T-cell (primary cell): ENCODE measurements at regions of chr13 and their contacts with region 1.

Region 1: DNA sequence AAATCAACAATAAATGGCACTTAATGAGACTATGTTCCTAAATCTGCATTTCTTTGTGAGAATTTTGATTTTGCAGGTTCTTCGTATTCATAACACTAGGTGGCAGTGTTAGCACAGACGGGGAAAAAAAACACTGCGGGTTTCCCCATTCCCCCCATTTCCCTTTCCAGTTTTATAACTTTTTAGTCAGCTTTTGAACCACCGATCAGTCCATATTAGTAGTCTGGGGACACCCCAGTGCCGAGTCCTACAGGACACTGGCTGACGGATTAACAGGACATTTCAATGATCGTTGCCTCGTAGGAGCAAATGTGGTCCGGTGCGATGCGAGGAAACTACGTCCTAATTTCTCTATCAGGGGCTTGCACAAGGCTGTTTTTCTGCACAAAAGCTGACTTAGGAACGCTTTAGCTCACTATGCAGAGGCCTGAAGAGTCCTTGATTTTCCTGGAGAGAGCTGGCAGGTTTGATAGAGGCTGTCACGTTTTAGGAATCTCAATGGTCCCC is 234.3 kb downstream of the LMO7 start:
- DNase-seq: peak in 11 of 35 experiments; percentile 1 to 56 (median 4)
- ATAC-seq: peak; percentile 33 to 65 (median 54)
- H3K4me3 ChIP-seq: peak overlapping the region in 1 of 2 donors; percentile 29
- H3K4me3 Mint-ChIP-seq: peak overlapping the region; percentile 63 to 74 (median 70)
- H3K27ac ChIP-seq: peak overlapping the region; percentile 48
- H3K27ac Mint-ChIP-seq: peak overlapping the region; percentile 81 to 85
- H3K4me1 ChIP-seq: peaks cover 5 to 12% of the 10 kb centered on the region in 2 experiments
- H3K4me1 Mint-ChIP-seq: peaks cover 18 to 20% (median 19%) of the 10 kb centered on the region in 3 donors
- H3K27me3 ChIP-seq: peaks cover 0 to 3% of the 10 kb centered on the region in 2 experiments
- H3K27me3 Mint-ChIP-seq: peaks cover 0 to 7% of the 10 kb centered on the region in 2 donors

Region 2: DNA sequence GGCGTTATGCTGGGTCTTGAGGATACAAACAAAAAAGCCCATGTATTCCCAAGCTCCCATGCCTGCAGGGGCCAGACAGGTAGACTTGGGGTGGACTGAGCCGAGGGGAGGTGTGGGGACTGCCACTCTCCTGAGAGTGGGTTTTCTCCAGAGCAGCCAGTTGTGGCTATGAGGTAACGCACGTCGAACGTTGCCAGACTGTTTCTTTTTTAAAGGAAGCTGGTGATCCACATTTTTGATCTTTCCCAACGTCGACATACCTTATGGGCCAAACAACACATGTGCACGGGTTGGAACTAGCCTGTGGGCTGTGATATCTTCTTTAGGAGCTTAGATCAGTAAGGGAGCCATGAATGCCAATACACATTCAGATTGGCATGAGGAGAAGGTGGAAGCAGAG is 173.7 kb before region 1 on chr13:
- CTCF ChIA-PET with region 1: interaction called, 9 to 13 read pairs
- POLR2A ChIA-PET with region 1: no interaction called
- DNase-seq: no peak
- ATAC-seq: no peak
- H3K4me3 ChIP-seq: no peak overlapping the region
- H3K4me3 Mint-ChIP-seq: no peak overlapping the region
- H3K27ac ChIP-seq: no peak overlapping the region
- H3K27ac Mint-ChIP-seq: no peak overlapping the region
- H3K4me1 ChIP-seq: peaks cover 0 to 3% of the 10 kb centered on the region in 2 experiments
- H3K4me1 Mint-ChIP-seq: no peaks in the 10 kb centered on the region
- H3K27me3 ChIP-seq: no peaks in the 10 kb centered on the region
- H3K27me3 Mint-ChIP-seq: no peaks in the 10 kb centered on the region

Region 3: DNA sequence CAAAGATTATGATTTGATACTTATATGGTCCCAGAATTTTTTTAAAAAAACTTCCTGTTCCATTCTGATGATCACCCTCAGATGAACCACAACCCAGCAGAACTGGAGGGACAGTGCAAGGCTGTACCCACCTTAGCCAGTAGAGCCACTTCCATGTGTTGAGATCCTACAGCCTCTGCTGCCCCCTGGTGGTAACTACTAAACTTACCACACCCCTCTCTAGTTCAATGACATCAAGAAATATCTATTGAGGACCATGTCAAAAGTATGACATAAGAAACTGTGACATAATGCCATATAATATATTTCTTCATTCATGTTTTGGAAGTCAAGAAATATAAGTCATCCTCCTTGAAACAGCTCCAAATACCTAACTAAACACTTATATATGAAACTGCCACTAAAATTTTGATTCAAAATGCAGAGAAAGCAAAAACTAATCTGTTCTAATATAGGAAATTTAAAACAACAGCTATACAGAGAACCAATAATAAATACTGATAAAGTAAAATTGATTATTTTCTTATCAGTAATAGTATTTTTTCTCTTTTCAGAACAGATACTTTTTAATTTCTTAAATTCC is 603.2 kb after region 1 on chr13:
- CTCF ChIA-PET with region 1: interaction called, 4 to 12 read pairs
- POLR2A ChIA-PET with region 1: no interaction called
- DNase-seq: peak; percentile 16 to 83 (median 54)
- ATAC-seq: peak; percentile 57 to 92 (median 76)
- H3K4me3 ChIP-seq: no peak overlapping the region
- H3K4me3 Mint-ChIP-seq: no peak overlapping the region
- H3K27ac ChIP-seq: no peak overlapping the region
- H3K27ac Mint-ChIP-seq: no peak overlapping the region
- H3K4me1 ChIP-seq: no peaks in the 10 kb centered on the region
- H3K4me1 Mint-ChIP-seq: no peaks in the 10 kb centered on the region
- H3K27me3 ChIP-seq: no peaks in the 10 kb centered on the region
- H3K27me3 Mint-ChIP-seq: peaks cover 4 to 10% of the 10 kb centered on the region in 2 donors